ENCODE measurements at regions of chr11 and their contacts with region 1.

Region 1: GRCh38 chr11:14974515-14975251 is 2.5 kb upstream of the CALCA start:
- DNase-seq: peak; percentile 85
- ATAC-seq: peak; percentile 67
- H3K4me3 Mint-ChIP-seq: peak overlapping the region; percentile 67
- H3K27ac Mint-ChIP-seq: no peak overlapping the region
- H3K4me1 Mint-ChIP-seq: peaks cover 59% of the 10 kb centered on the region
- H3K27me3 Mint-ChIP-seq: peaks cover 91% of the 10 kb centered on the region
- CTCF ChIP-seq: peak; percentile 72

Region 2: GRCh38 chr11:14892036-14892567 is 82.6 kb before region 1 on chr11 and contains the start of gene CYP2R1:
- CTCF ChIA-PET with region 1: interaction called, 11 read pairs
- POLR2A ChIA-PET with region 1: interaction called, 3 read pairs
- DNase-seq: peak; percentile 97
- ATAC-seq: peak; percentile 98
- H3K4me3 Mint-ChIP-seq: peak within 1 kb of the TSS; percentile 90
- H3K27ac Mint-ChIP-seq: peak within 1 kb of the TSS; percentile 50
- H3K4me1 Mint-ChIP-seq: peaks cover 20% of the 10 kb centered on the region
- H3K27me3 Mint-ChIP-seq: peaks cover 34% of the 10 kb centered on the region
- CTCF ChIP-seq: no peak
- total RNA-seq, gene CYP2R1: 14.9 to 23.1 TPM (median 18.3 TPM) in 3 replicates

Region 3: DNA sequence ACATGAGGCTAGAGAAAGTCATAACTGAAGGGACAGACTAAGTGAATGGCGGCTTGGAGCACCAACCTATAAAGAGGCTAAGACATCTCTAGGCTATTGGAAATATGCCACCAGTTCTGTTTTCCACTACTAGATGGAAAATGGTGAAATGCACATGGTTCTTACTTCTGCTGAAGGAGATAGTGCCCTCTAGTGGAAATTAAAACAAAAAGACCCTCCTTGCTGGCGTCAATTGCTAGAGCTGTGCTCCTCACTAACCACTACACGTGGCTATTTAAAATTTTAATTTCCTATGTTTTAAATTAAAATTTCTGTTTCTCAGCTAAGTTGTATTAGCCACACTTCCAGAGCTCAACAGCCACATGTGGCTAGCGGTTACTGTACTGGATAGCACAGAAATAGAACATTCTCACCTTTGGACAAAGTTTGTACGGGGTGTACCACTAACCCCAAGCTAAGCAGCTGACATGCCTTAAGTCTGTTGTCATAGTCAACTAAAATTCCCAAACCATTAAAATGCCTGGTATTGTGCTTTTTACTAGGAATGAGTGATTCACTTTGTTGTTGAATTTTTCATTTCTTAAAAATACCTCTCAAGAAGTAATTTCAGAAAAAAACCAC is 31.6 kb after region 1 on chr11:
- CTCF ChIA-PET with region 1: interaction called, 106 read pairs
- POLR2A ChIA-PET with region 1: interaction called, 4 read pairs
- DNase-seq: no peak
- ATAC-seq: peak; percentile 88
- H3K4me3 Mint-ChIP-seq: no peak overlapping the region
- H3K27ac Mint-ChIP-seq: no peak overlapping the region
- H3K4me1 Mint-ChIP-seq: no peaks in the 10 kb centered on the region
- H3K27me3 Mint-ChIP-seq: no peaks in the 10 kb centered on the region
- CTCF ChIP-seq: peak; percentile 20; the same call in 1 of the 2 replicates

Region 4: DNA sequence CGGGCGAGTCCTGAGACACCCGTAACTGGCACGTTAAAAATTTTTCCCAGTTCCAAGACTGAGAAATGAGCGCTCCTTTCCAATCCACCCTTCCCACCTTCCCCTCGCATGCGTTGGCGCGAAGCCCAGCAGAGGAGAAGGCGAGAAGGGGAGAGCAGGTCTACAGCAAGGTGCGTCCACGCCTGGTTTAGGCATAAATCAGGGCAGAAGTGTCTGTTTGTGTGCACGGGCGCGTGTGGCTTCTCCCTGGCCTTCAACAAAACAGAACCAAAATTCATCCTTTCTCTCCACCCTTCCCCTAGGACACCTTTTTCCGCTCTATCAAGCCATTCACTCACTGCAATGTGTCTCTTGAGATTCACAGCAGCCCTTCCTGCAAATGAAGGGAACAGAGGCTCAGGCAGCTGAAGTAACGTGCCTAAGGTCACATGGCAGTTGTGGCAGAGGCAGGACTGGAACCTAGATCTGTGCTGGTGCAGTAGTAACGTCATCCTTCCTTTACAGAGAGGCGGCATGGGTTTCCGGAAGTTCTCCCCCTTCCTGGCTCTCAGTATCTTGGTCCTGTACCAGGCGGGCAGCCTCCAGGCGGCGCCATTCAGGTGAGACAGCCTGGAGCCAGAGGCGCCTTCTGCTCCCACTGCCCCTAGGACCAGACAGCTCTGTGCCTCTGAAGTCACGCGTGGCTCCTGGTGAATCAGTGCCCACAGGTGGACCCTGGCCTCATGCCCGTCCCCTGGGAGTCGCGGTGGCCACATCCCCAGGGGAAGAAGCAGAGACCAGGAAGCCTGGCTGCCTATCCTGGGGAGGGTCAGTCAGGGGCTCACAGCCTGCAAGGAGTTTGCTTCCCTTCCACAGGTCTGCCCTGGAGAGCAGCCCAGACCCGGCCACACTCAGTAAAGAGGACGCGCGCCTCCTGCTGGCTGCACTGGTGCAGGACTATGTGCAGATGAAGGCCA is 99.8 kb after region 1 on chr11:
- CTCF ChIA-PET with region 1: interaction called, 83 read pairs
- POLR2A ChIA-PET with region 1: no interaction called
- DNase-seq: peak; percentile 97
- ATAC-seq: peak; percentile 91
- H3K4me3 Mint-ChIP-seq: peak overlapping the region; percentile 78
- H3K27ac Mint-ChIP-seq: no peak overlapping the region
- H3K4me1 Mint-ChIP-seq: peaks cover 17% of the 10 kb centered on the region
- H3K27me3 Mint-ChIP-seq: peaks cover 51% of the 10 kb centered on the region
- CTCF ChIP-seq: peak; percentile 73